ENCODE measurements at regions of chr2 and their contacts with region 1.

Region 1: GRCh38 chr2:57906152-57906732 is 140.4 kb upstream of the VRK2 start:
- DNase-seq: peak; percentile 57
- H3K4me3 ChIP-seq: no peak overlapping the region
- H3K27ac ChIP-seq: no peak overlapping the region
- H3K4me1 ChIP-seq: no peaks in the 10 kb centered on the region
- H3K27me3 ChIP-seq: no peaks in the 10 kb centered on the region
- CTCF ChIP-seq: peak; percentile 68 to 72
- POLR2A ChIP-seq: no peak

Region 2: GRCh38 chr2:57759822-57760300 is 146.4 kb before region 1 on chr2:
- CTCF ChIA-PET with region 1: interaction called, 13 read pairs
- POLR2A ChIA-PET with region 1: no interaction called
- dilution Hi-C with region 1: no loop called
- intact Hi-C with region 1: loop called (anchors 1 kb)
- DNase-seq: peak; percentile 77
- H3K4me3 ChIP-seq: peak overlapping the region in 1 of 3 experiments; percentile 23
- H3K27ac ChIP-seq: no peak overlapping the region
- H3K4me1 ChIP-seq: peaks cover 4% of the 10 kb centered on the region
- H3K27me3 ChIP-seq: peaks cover 1 to 5% of the 10 kb centered on the region in 2 experiments
- CTCF ChIP-seq: peak; percentile 85 to 96
- POLR2A ChIP-seq: no peak

Region 3: GRCh38 chr2:57959390-57959789 is 53.1 kb after region 1 on chr2:
- CTCF ChIA-PET with region 1: no interaction called
- POLR2A ChIA-PET with region 1: no interaction called
- dilution Hi-C with region 1: no loop called
- intact Hi-C with region 1: no loop called
- DNase-seq: no peak
- H3K4me3 ChIP-seq: no peak overlapping the region
- H3K27ac ChIP-seq: no peak overlapping the region
- H3K4me1 ChIP-seq: no peaks in the 10 kb centered on the region
- H3K27me3 ChIP-seq: no peaks in the 10 kb centered on the region
- CTCF ChIP-seq: no peak
- POLR2A ChIP-seq: no peak

Region 4: DNA sequence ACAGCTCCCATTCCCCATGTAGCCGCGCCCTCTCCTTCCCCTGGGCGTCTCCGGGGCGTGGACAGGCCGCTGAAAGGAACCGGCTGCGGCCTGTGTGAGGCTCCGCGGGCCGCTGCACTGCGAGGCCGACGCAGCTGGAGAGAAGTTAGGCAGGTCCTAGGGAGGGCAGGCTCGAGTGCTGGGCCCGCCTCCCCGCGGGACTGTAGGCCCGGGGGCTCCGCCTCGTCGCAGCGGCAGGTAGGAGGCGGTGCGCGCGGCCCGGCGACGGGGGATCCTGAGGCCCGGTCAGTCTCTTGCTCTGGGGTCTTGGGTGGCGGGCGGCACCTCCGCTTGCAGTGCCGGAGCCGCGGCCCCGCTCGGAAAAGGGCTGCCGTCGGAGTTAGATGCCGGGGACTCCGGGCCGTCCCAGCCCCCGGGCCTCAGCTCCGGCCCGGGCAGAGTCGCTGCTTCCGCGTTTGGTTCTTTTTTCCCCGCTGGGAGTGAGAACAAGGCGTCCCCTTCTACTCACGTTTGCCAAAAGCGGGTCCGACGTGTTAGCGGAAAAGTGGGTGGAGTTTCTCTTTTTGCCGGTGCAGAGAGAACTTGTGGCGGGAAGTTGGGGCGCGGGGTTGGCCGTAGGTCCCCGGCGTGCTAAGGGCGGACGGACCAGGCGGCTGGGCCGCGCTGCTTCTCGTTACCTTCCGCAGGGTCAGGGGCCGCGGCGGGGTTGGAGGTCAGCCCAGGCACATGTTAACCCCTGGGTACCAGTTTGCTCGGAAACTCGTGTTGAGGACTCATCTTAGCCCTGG is 140.5 kb after region 1 on chr2 and contains the start of gene VRK2:
- CTCF ChIA-PET with region 1: interaction called, 7 read pairs
- POLR2A ChIA-PET with region 1: no interaction called
- dilution Hi-C with region 1: no loop called
- intact Hi-C with region 1: loop called (anchors 5 kb)
- DNase-seq: peak; percentile 94
- H3K4me3 ChIP-seq: peak within 1 kb of the TSS; percentile 60 to 74 (median 68)
- H3K27ac ChIP-seq: peak within 1 kb of the TSS; percentile 97
- H3K4me1 ChIP-seq: peaks cover 45% of the 10 kb centered on the region
- H3K27me3 ChIP-seq: no peaks in the 10 kb centered on the region
- CTCF ChIP-seq: no peak
- POLR2A ChIP-seq: peak; percentile 92
- total RNA-seq, gene VRK2: 35.2 and 42.0 TPM in 2 replicates

Region 5: DNA sequence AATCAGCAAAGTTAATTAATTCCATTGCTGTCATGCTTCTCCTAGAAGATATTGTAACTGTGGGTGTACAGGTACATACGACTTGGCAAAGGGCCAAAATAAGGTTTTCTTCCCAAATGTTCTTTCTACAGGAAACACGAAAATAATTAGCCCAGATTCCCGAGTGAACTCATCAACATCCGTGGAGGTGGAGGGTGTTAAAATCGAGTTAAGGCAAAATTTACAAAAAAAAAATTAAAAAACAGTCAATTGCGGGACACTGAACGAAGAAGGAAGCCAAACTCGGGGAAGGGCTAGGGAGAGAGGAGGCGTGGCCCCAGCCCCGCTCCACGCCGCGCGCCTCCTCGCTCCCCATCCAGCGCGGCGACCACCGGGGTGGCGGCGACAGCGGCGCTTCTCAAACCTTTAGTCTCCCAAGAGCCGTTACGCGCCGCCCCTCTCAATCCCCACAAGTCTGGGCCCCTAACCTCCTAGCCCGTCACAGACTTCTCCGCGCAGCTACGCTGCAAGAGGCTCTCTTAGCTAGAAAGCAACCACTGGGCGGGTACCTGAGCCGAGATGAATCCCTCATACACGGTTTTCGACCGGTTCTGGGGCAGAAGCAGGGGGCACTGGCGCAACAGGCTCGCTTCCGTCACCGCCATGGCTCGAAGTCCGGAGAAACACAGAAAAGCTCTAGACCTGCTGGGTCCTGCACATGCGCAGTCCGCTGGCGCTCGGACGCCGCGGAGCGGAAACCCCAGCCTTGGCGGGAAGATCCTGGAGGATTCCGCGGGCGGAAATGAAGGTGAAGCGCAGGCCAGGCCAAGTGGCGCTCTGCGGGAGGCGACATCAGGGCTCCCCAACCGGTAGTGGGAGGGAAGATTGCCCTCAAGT is 334.7 kb after region 1 on chr2 and contains the start of gene FANCL:
- CTCF ChIA-PET with region 1: interaction called, 3 read pairs
- POLR2A ChIA-PET with region 1: no interaction called
- dilution Hi-C with region 1: no loop called
- intact Hi-C with region 1: loop called (anchors 5 kb)
- DNase-seq: peak; percentile 87
- H3K4me3 ChIP-seq: peak within 1 kb of the TSS; percentile 35 to 92 (median 73)
- H3K27ac ChIP-seq: peak within 1 kb of the TSS; percentile 27
- H3K4me1 ChIP-seq: peaks cover 16% of the 10 kb centered on the region
- H3K27me3 ChIP-seq: peaks cover 0 to 2% of the 10 kb centered on the region in 2 experiments
- CTCF ChIP-seq: no peak
- POLR2A ChIP-seq: peak; percentile 70
- total RNA-seq, gene FANCL: 15.8 and 16.7 TPM in 2 replicates

Region 6: DNA sequence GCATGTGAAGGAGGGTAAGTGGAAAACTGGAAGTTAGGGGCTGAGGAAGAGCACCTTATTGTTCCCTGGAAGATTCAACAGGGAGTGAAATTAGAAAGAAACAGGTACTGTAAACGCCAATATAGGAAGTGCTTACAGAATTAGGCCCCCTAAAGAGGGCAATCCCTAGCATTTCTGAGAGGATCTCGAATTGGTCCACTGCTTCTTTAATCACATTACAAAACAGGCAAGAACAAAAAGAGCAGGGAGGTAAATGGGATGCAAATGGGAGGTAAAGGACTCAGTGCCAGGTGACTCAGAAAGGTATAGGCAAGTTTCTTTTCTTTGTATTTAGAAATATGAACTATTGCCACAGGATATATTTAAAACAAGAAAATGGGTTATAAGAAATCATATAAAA is 451.3 kb after region 1 on chr2:
- CTCF ChIA-PET with region 1: interaction called, 12 read pairs
- POLR2A ChIA-PET with region 1: no interaction called
- dilution Hi-C with region 1: no loop called
- intact Hi-C with region 1: no loop called
- DNase-seq: no peak
- H3K4me3 ChIP-seq: no peak overlapping the region
- H3K27ac ChIP-seq: no peak overlapping the region
- H3K4me1 ChIP-seq: no peaks in the 10 kb centered on the region
- H3K27me3 ChIP-seq: peaks cover 0 to 3% of the 10 kb centered on the region in 2 experiments
- CTCF ChIP-seq: no peak
- POLR2A ChIP-seq: no peak

Region 7: DNA sequence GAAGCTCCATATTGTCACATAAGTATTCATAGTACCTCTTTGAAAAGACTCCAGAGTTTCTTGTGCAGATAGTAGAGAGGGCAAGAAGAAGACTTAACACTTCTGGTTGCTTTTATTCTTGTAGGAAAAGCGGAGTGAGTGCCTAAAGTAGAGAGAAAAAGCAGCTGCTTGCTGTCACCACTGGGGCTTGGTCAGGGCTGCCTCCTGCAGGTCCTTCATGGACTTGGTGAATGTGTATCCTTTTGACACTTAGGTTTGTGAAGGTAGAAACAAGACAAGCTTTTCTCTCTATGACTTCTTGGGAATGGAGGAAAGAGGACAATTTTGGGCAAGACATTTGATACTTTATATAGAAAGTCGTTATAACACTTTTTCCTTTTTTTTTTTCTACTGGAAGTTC is 647.7 kb after region 1 on chr2:
- CTCF ChIA-PET with region 1: interaction called, 11 read pairs
- POLR2A ChIA-PET with region 1: no interaction called
- dilution Hi-C with region 1: no loop called
- intact Hi-C with region 1: loop called (anchors 5 kb)
- DNase-seq: no peak
- H3K4me3 ChIP-seq: no peak overlapping the region
- H3K27ac ChIP-seq: no peak overlapping the region
- H3K4me1 ChIP-seq: no peaks in the 10 kb centered on the region
- H3K27me3 ChIP-seq: peaks cover 4% of the 10 kb centered on the region in 2 experiments
- CTCF ChIP-seq: no peak
- POLR2A ChIP-seq: no peak

Region 8: GRCh38 chr2:58680755-58681310 is 774.6 kb after region 1 on chr2:
- CTCF ChIA-PET with region 1: interaction called, 8 read pairs
- POLR2A ChIA-PET with region 1: no interaction called
- dilution Hi-C with region 1: no loop called
- intact Hi-C with region 1: loop called (anchors 5 kb)
- DNase-seq: peak; percentile 8
- H3K4me3 ChIP-seq: no peak overlapping the region
- H3K27ac ChIP-seq: no peak overlapping the region
- H3K4me1 ChIP-seq: no peaks in the 10 kb centered on the region
- H3K27me3 ChIP-seq: no peaks in the 10 kb centered on the region
- CTCF ChIP-seq: no peak
- POLR2A ChIP-seq: no peak